ENCODE measurements at regions of chr1 and their contacts with region 1.

Region 1: GRCh38 chr1:2003278-2004131 is at the start of gene CFAP74:
- DNase-seq: no peak
- total RNA-seq, gene CFAP74: not detected

Region 2: GRCh38 chr1:1985375-1986050 is 18.0 kb before region 1 on chr1:
- intact Hi-C with region 1: no loop called
- DNase-seq: no peak

Region 3: GRCh38 chr1:2031546-2032540 is 28.3 kb after region 1 on chr1:
- intact Hi-C with region 1: loop called in 1 of 2 experiments (anchors 1 kb)
- DNase-seq: no peak

Measured in posterior vena cava (tissue), 2 donors.